Activated B cell treated with CpG ODN at 0.5 μM for 24 hours (primary cell): ENCODE measurements at regions of chr2 and their contacts with region 1.

Region 1: GRCh38 chr2:46720592-46721185 is 194.9 kb downstream of the MCFD2 start:
- DNase-seq: no peak
- ATAC-seq: no peak
- H3K4me3 Mint-ChIP-seq: peak overlapping the region; percentile 9
- H3K27ac Mint-ChIP-seq: peak overlapping the region; percentile 15
- H3K4me1 Mint-ChIP-seq: peaks cover 80% of the 10 kb centered on the region
- H3K27me3 Mint-ChIP-seq: no peaks in the 10 kb centered on the region
- CTCF ChIP-seq: no peak

Region 2: GRCh38 chr2:46400016-46400415 is 320.7 kb before region 1 on chr2:
- CTCF ChIA-PET with region 1: no interaction called
- POLR2A ChIA-PET with region 1: no interaction called
- intact Hi-C with region 1: no loop called
- DNase-seq: no peak
- ATAC-seq: no peak
- H3K4me3 Mint-ChIP-seq: no peak overlapping the region
- H3K27ac Mint-ChIP-seq: no peak overlapping the region
- H3K4me1 Mint-ChIP-seq: no peaks in the 10 kb centered on the region
- H3K27me3 Mint-ChIP-seq: peaks cover 12% of the 10 kb centered on the region
- CTCF ChIP-seq: no peak

Region 3: DNA sequence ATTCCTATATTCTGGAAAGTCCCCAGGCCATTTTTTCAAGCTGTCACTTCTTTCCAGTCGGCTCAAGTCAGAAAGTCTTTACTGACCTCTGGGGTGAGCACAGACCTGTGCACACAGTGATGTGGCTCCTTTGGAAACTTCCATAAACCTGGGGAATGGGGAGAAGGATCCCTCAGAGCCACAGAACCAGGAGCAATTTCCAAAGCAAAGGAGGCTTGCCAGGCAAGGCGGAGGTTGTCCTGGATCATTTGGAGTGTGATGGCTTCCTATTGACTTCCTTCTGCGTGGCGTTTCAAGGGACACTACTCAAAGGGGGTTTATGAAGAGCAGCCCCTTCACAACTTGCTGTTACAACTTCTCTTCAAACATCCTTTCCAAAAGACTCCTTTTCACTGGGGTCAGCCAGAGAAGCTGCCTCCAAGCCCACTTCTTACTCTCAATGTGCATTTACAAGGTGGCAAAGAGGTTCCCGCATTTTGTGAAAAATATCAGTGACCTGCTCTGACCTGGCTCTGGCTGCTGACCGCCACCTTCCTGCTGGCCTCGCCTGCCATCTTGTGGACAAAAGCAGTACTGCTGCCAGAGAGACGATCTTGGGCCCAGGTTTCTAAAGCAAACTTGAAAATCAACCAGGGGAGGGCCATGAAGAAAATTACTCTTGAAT is 259.5 kb before region 1 on chr2:
- CTCF ChIA-PET with region 1: no interaction called
- POLR2A ChIA-PET with region 1: no interaction called
- intact Hi-C with region 1: no loop called
- DNase-seq: peak; percentile 71
- ATAC-seq: peak; percentile 80
- H3K4me3 Mint-ChIP-seq: peak overlapping the region; percentile 60
- H3K27ac Mint-ChIP-seq: peak overlapping the region; percentile 81
- H3K4me1 Mint-ChIP-seq: peaks cover 21% of the 10 kb centered on the region
- H3K27me3 Mint-ChIP-seq: no peaks in the 10 kb centered on the region
- CTCF ChIP-seq: peak; percentile 74

Region 4: GRCh38 chr2:46706264-46706983 is 14.3 kb before region 1 on chr2:
- CTCF ChIA-PET with region 1: no interaction called
- POLR2A ChIA-PET with region 1: interaction called, 3 read pairs
- intact Hi-C with region 1: loop called (anchors 2 kb)
- DNase-seq: no peak
- ATAC-seq: no peak
- H3K4me3 Mint-ChIP-seq: no peak overlapping the region
- H3K27ac Mint-ChIP-seq: no peak overlapping the region
- H3K4me1 Mint-ChIP-seq: peaks cover 52% of the 10 kb centered on the region
- H3K27me3 Mint-ChIP-seq: no peaks in the 10 kb centered on the region
- CTCF ChIP-seq: no peak

Region 5: DNA sequence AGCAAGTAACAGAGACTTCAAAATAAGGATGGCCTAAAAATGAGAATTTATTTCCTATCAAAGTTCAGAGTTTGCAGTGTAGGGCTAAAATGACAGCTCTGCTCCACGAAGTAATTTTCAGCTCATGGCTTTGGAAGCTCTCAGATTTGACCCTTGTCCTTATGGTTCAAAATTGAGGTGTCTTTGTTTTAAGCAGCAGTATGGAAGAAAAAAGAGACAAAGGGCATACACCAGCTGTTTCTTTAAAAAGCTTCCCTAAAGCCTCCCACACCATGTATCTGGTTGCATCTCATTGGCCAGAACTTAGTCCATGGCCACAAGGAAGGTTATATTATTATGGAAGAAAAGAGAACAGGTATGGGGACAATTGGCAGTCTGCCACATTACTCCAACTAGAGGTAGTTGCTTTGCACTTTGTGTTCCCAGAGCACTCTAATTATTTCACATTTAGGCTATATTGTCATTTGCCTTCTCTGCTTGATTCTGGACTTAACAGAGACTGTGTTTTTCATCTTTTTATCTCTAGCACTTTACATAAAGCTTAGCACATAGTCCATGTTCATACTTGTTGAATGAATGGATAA is 14.5 kb after region 1 on chr2:
- CTCF ChIA-PET with region 1: no interaction called
- POLR2A ChIA-PET with region 1: no interaction called
- intact Hi-C with region 1: loop called (anchors 2 kb)
- DNase-seq: no peak
- ATAC-seq: no peak
- H3K4me3 Mint-ChIP-seq: no peak overlapping the region
- H3K27ac Mint-ChIP-seq: no peak overlapping the region
- H3K4me1 Mint-ChIP-seq: peaks cover 42% of the 10 kb centered on the region
- H3K27me3 Mint-ChIP-seq: no peaks in the 10 kb centered on the region
- CTCF ChIP-seq: no peak

Region 6: GRCh38 chr2:46763861-46764260 is 43.2 kb after region 1 on chr2:
- CTCF ChIA-PET with region 1: no interaction called
- POLR2A ChIA-PET with region 1: interaction called, 10 read pairs
- intact Hi-C with region 1: no loop called
- DNase-seq: no peak
- ATAC-seq: no peak
- H3K4me3 Mint-ChIP-seq: no peak overlapping the region
- H3K27ac Mint-ChIP-seq: no peak overlapping the region
- H3K4me1 Mint-ChIP-seq: no peaks in the 10 kb centered on the region
- H3K27me3 Mint-ChIP-seq: no peaks in the 10 kb centered on the region
- CTCF ChIP-seq: no peak

Region 7: DNA sequence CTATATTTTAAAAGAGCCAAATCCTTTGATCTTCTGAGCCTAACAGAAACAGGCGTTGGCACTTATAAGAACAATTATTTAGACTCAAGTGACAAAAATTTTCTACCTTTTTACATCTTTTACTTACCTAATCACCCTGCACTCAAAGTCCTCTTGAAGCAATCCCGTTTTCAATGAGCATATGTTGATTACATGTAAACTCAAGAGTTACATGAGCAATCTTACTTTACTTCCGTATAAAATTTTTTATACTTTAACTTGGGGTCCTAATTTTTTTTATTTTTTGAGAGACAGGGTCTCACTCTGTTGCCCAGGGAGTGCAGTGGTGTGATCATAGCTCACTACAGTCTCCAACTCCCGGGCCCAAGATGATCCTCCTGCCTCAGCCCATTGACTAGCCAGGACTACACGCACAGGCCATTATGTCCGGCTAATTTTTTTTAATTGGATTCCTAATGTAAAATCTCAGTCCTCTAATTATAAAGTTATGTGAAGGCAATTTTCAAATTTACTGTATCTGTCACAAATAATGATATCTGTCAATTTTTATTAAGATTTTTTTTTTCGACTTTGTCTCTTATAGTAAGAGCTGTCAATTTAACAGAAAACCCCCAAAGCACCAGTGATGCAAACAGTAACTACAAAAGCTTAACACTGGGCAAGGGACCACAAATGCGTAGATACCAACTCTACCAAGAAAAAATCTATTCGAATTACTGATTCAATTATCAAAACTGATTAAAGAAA is 453.5 kb after region 1 on chr2:
- CTCF ChIA-PET with region 1: no interaction called
- POLR2A ChIA-PET with region 1: interaction called, 10 read pairs
- intact Hi-C with region 1: no loop called
- DNase-seq: no peak
- ATAC-seq: no peak
- H3K4me3 Mint-ChIP-seq: peak overlapping the region; percentile 95
- H3K27ac Mint-ChIP-seq: peak overlapping the region; percentile 96
- H3K4me1 Mint-ChIP-seq: peaks cover 77% of the 10 kb centered on the region
- H3K27me3 Mint-ChIP-seq: no peaks in the 10 kb centered on the region
- CTCF ChIP-seq: no peak